ENCODE measurements at regions of chr2 and their contacts with region 1.

Region 1: GRCh38 chr2:173402405-173402974 is 47.8 kb downstream of the CDCA7 start:
- DNase-seq: peak; percentile 59
- H3K4me3 ChIP-seq: peak overlapping the region; percentile 35; the same call in 1 of the 2 replicates
- H3K27ac ChIP-seq: no peak overlapping the region
- H3K27me3 ChIP-seq: peaks cover 52% of the 10 kb centered on the region
- CTCF ChIP-seq: peak; percentile 95

Region 2: GRCh38 chr2:173419506-173419905 is 17.0 kb after region 1 on chr2:
- CTCF ChIA-PET with region 1: interaction called, 11 read pairs
- POLR2A ChIA-PET with region 1: no interaction called
- DNase-seq: no peak
- H3K4me3 ChIP-seq: no peak overlapping the region
- H3K27ac ChIP-seq: no peak overlapping the region
- H3K27me3 ChIP-seq: peaks cover 24% of the 10 kb centered on the region
- CTCF ChIP-seq: no peak

Region 3: DNA sequence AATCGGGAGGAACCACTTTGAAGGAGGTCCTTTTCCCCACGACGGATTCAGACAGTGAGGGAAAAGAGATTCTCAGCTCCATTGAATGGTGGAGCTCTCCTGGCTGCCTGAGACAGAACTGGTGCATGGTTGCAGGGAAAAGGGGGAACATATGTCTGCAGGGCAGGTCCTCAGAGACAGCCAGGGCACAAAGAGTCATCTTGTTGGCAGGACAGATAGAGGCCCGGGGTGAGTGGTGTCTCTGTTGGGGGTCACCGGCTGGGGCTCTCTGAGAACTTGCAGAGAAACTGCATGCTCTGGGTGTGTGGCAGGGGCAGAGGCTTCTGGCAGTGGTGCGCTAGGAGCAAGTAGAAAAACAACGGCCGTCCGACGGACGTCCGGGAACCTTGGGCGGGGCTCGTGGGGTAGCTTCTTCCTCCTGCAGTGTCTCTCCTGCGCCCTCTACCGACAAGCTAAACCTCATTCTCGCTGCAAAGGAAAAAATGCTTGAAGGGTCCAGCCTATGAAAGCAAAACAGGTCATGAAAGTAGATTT is 46.5 kb after region 1 on chr2:
- CTCF ChIA-PET with region 1: interaction called, 73 read pairs
- POLR2A ChIA-PET with region 1: no interaction called
- DNase-seq: peak; percentile 42
- H3K4me3 ChIP-seq: peak overlapping the region; percentile 38
- H3K27ac ChIP-seq: no peak overlapping the region
- H3K27me3 ChIP-seq: peaks cover 19% of the 10 kb centered on the region
- CTCF ChIP-seq: peak; percentile 90

Region 4: DNA sequence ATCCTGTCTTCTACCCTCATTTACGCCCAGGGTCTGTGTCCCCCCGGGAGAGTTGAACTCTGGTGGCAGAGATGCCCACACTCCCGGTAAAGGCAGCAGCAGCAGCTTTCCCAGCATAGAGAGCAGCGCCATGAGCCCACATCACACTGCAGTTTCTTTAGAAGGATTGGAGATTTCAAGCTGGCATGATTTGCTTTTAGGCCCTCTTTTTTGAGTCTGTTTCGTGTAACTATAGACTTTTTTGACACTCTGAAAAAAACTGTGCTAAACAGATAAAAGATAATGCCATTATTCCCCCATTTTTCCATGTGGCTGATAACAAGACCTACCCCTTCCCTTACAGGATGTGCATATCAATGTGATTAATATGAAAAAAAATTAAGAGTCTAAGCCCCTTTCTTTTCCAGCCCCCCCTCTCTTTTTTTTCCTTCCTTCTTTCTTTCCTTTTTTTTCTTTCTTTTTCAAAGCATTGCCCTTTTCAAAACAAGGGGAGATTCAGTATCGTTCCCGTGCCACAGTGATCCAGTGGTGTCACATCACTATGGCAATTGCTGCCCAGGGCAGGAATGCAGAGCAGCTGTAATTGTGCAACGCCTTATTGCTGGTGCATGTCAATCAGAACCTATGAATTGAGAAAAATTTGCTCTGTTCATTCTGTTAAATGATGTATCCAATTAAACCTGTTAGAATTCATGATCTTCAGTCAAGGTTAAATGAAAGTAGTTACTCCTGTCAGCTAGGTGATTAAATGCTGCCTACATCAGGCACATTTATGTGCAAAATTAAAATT is 56.7 kb after region 1 on chr2:
- CTCF ChIA-PET with region 1: no interaction called
- POLR2A ChIA-PET with region 1: no interaction called
- DNase-seq: no peak
- H3K4me3 ChIP-seq: no peak overlapping the region
- H3K27ac ChIP-seq: no peak overlapping the region
- H3K27me3 ChIP-seq: peaks cover 21% of the 10 kb centered on the region
- CTCF ChIP-seq: no peak

Region 5: GRCh38 chr2:173749315-173749714 is 346.8 kb after region 1 on chr2:
- CTCF ChIA-PET with region 1: interaction called, 23 read pairs
- POLR2A ChIA-PET with region 1: no interaction called
- DNase-seq: no peak
- H3K4me3 ChIP-seq: no peak overlapping the region
- H3K27ac ChIP-seq: no peak overlapping the region
- H3K27me3 ChIP-seq: peaks cover 5% of the 10 kb centered on the region
- CTCF ChIP-seq: peak; percentile 63